Activated CD4-positive, alpha-beta T cell treated with anti-CD3 and anti-CD28 coated beads for 36 hours (primary cell): ENCODE measurements at regions of chr6 and their contacts with region 1.

Region 1: DNA sequence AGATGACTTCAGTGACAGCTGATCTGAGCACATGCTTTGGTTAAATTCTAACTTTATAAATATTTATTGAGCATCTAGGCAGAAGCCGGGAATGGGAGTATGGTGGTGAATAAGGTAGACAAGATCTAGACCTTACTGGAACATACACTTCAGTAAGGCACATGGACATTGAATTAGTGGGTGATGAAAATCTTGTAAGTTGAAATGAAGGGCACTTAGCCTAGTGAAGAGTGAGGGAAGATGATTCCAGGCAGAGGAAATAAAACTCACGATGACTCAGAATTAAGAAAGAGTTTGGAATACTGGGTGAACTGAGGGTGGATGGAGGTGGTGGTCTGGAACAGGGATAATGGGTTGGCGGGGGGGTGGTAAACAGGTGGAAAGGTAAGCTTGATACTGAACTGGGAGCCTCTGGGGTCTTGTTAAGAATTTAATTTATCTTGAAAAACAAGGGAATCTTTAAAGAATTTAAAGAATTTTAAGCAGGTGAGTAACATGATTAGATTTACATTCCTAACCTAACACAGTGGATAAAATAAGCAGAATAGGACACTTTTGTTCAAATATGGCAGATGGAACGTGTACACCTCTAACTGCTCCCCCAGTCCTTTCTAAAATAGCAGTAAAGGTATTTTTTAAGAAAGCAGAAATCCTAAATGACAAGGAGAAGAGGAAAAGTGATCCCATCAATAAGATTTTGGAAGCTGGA is 75.2 kb upstream of the ARHGAP18 start:
- DNase-seq: no peak
- ATAC-seq: no peak
- H3K4me3 Mint-ChIP-seq: no peak overlapping the region
- H3K27ac Mint-ChIP-seq: no peak overlapping the region
- H3K4me1 Mint-ChIP-seq: no peaks in the 10 kb centered on the region
- H3K27me3 Mint-ChIP-seq: no peaks in the 10 kb centered on the region

Region 2: GRCh38 chr6:129774697-129775447 is 10.3 kb before region 1 on chr6:
- CTCF ChIA-PET with region 1: interaction called, 15 read pairs
- POLR2A ChIA-PET with region 1: no interaction called
- intact Hi-C with region 1: no loop called
- DNase-seq: peak; percentile 68
- ATAC-seq: peak; percentile 23
- H3K4me3 Mint-ChIP-seq: no peak overlapping the region
- H3K27ac Mint-ChIP-seq: no peak overlapping the region
- H3K4me1 Mint-ChIP-seq: no peaks in the 10 kb centered on the region
- H3K27me3 Mint-ChIP-seq: peaks cover 9% of the 10 kb centered on the region